A673 (cell line): ENCODE measurements at regions of chr2 and their contacts with region 1.

Region 1: DNA sequence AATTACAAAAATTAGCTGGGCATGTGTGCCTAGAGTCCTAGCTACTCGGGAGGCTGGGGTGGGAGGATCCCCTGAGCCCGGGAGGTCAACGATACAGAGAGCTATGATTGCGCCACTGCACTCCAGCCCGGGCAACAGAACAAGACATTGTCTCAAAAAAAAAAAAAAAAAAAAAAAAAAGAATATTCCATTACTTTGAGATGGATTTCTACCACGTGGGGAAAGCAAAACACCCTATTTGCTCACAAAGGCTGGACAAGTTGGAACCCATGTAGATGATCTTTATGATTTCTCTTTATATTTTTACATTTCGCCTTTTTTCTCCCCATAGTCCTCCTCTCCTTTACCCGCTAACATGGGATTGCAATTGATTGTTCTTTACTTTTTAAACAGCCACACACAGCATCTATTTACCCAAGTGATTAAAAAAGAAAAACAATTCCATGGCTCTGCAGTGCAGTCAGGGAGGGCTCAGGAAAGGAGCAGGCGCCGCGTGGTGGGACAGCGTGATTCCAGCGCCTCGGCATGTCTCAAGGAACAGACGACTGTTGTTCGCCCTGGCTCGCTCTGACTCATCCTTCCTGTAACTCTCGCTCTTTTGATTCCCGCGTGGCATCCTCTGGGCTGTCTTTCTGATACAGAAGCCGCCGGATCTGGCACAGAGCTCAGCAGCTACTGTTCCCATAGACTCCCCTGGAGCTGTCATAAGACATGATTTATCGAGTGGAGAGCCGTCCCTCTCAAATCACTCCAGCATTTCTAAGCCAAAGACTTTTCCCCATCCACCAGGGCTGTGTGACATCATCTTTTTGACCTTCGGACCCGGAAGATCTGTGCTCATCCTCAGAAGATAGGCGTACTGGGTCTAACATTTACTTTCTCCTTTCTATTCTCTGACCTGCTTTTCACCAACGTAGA is 230.4 kb upstream of the AGAP1 start:
- DNase-seq: peak; percentile 95
- H3K4me3 ChIP-seq: peak overlapping the region; percentile 14
- H3K27ac ChIP-seq: peak overlapping the region; percentile 10
- H3K4me1 ChIP-seq: peaks cover 28% of the 10 kb centered on the region
- H3K27me3 ChIP-seq: no peaks in the 10 kb centered on the region
- CTCF ChIP-seq: 0 out of 2 replicates have a peak, but pooled peaks have one; percentile 13

Region 2: GRCh38 chr2:235129850-235130249 is 133.6 kb before region 1 on chr2:
- CTCF ChIA-PET with region 1: no interaction called
- POLR2A ChIA-PET with region 1: no interaction called
- intact Hi-C with region 1: loop called (anchors 5 kb)
- DNase-seq: no peak
- H3K4me3 ChIP-seq: no peak overlapping the region
- H3K27ac ChIP-seq: no peak overlapping the region
- H3K4me1 ChIP-seq: peaks cover 31% of the 10 kb centered on the region
- H3K27me3 ChIP-seq: no peaks in the 10 kb centered on the region
- CTCF ChIP-seq: no peak

Region 3: GRCh38 chr2:235416864-235417499 is 153.5 kb after region 1 on chr2:
- CTCF ChIA-PET with region 1: interaction called, 16 read pairs
- POLR2A ChIA-PET with region 1: no interaction called
- intact Hi-C with region 1: no loop called
- DNase-seq: peak; percentile 15
- H3K4me3 ChIP-seq: no peak overlapping the region
- H3K27ac ChIP-seq: no peak overlapping the region
- H3K4me1 ChIP-seq: peaks cover 6% of the 10 kb centered on the region
- H3K27me3 ChIP-seq: no peaks in the 10 kb centered on the region
- CTCF ChIP-seq: no peak

Region 4: DNA sequence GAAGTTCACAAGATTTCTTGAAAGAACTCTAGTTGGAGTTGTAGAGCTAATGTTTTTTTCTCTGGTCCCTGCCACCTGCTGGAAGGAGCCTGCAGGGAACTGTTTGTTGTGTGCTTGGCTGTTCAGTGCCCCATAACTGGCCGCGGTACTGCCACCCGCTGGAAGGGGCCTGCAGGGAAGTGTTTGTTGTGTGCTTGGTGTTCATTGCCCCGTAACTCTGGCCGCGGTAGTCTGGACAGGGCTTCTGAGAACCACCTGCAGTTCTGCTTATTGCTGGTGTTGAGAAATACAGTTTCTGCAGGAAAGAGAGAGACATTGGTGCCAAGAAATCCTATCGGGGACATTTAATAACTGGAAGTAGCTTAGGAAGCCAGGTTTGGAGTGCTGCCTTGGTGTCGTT is 288.5 kb after region 1 on chr2:
- CTCF ChIA-PET with region 1: no interaction called
- POLR2A ChIA-PET with region 1: no interaction called
- intact Hi-C with region 1: no loop called
- DNase-seq: peak; percentile 70
- H3K4me3 ChIP-seq: no peak overlapping the region
- H3K27ac ChIP-seq: no peak overlapping the region
- H3K4me1 ChIP-seq: peaks cover 10% of the 10 kb centered on the region
- H3K27me3 ChIP-seq: no peaks in the 10 kb centered on the region
- CTCF ChIP-seq: peak; percentile 72